A549 (cell line): ENCODE measurements at regions of chr1 and their contacts with region 1.

Region 1: GRCh38 chr1:227343727-227344551 is 25.6 kb upstream of the CDC42BPA start:
- DNase-seq: peak; percentile 32 to 58
- ATAC-seq: peak; percentile 86 to 98
- H3K4me3 ChIP-seq: no peak overlapping the region
- H3K27ac ChIP-seq: peak overlapping the region; percentile 65 to 68
- H3K4me1 ChIP-seq: peaks cover 17% of the 10 kb centered on the region
- CTCF ChIP-seq: no peak
- EP300 ChIP-seq: no peak
- POLR2A ChIP-seq: no peak
- RAD21 ChIP-seq: peak in 1 of 2 experiments; percentile 35; a peak in 1 of 5 replicates

Region 2: GRCh38 chr1:227357171-227357880 is 13.4 kb after region 1 on chr1:
- CTCF ChIA-PET with region 1: interaction called, 14 read pairs
- POLR2A ChIA-PET with region 1: no interaction called
- DNase-seq: peak; percentile 87 to 91
- ATAC-seq: peak; percentile 95
- H3K4me3 ChIP-seq: 0 out of 3 replicates have a peak overlapping the region, but pooled peaks have one; percentile 0
- H3K27ac ChIP-seq: peak overlapping the region; percentile 86 to 92
- H3K4me1 ChIP-seq: peaks cover 24% of the 10 kb centered on the region
- CTCF ChIP-seq: no peak
- EP300 ChIP-seq: peak; percentile 15 to 58; a peak in 2 of 5 replicates
- POLR2A ChIP-seq: no peak
- RAD21 ChIP-seq: peak in 1 of 2 experiments; percentile 38; a peak in 3 of 5 replicates